CD8-positive, alpha-beta T cell (primary cell): ENCODE measurements at regions of chr1 and their contacts with region 1.

Region 1: GRCh38 chr1:147640553-147641165 is 29.7 kb downstream of the ACP6 start:
- DNase-seq: peak; percentile 52 to 90 (median 77)
- ATAC-seq: peak; percentile 100
- H3K4me3 ChIP-seq: no peak overlapping the region
- H3K4me3 Mint-ChIP-seq: no peak overlapping the region
- H3K27ac ChIP-seq: no peak overlapping the region
- H3K27ac Mint-ChIP-seq: no peak overlapping the region
- H3K4me1 ChIP-seq: peaks cover 7% of the 10 kb centered on the region
- H3K4me1 Mint-ChIP-seq: peaks cover 20% of the 10 kb centered on the region
- H3K27me3 ChIP-seq: no peaks in the 10 kb centered on the region
- H3K27me3 Mint-ChIP-seq: no peaks in the 10 kb centered on the region
- CTCF ChIP-seq: peak; percentile 72

Region 2: DNA sequence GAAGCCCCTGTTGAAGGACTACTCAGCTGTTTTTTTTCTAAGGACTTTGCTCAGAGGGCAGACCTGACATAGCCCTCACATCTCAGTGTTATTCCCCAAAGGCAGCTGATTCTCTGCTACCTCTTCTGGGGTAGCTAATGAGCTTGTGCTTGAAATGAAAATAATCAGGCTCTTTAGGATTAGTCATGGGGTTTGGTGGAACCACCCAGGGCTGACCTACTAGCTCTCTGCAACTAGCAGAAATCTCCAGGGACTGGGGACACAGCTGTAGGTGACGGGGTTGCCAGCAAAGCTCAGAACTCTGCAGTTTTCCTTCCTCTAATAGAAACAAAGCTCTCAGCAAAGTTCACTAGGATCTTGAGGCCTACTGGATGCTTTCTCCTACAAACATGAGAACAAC is 205.7 kb before region 1 on chr1:
- CTCF ChIA-PET with region 1: no interaction called
- POLR2A ChIA-PET with region 1: no interaction called
- intact Hi-C with region 1: no loop called
- DNase-seq: no peak
- ATAC-seq: no peak
- H3K4me3 ChIP-seq: no peak overlapping the region
- H3K4me3 Mint-ChIP-seq: no peak overlapping the region
- H3K27ac ChIP-seq: no peak overlapping the region
- H3K27ac Mint-ChIP-seq: no peak overlapping the region
- H3K4me1 ChIP-seq: no peaks in the 10 kb centered on the region
- H3K4me1 Mint-ChIP-seq: no peaks in the 10 kb centered on the region
- H3K27me3 ChIP-seq: no peaks in the 10 kb centered on the region
- H3K27me3 Mint-ChIP-seq: peaks cover 2% of the 10 kb centered on the region
- CTCF ChIP-seq: no peak

Region 3: GRCh38 chr1:147494998-147495580 is 145.6 kb before region 1 on chr1:
- CTCF ChIA-PET with region 1: interaction called, 25 read pairs
- POLR2A ChIA-PET with region 1: interaction called, 4 read pairs
- intact Hi-C with region 1: loop called (anchors 1 kb)
- DNase-seq: peak; percentile 31 to 82 (median 72)
- ATAC-seq: peak; percentile 96
- H3K4me3 ChIP-seq: no peak overlapping the region
- H3K4me3 Mint-ChIP-seq: no peak overlapping the region
- H3K27ac ChIP-seq: no peak overlapping the region
- H3K27ac Mint-ChIP-seq: no peak overlapping the region
- H3K4me1 ChIP-seq: no peaks in the 10 kb centered on the region
- H3K4me1 Mint-ChIP-seq: peaks cover 4% of the 10 kb centered on the region
- H3K27me3 ChIP-seq: no peaks in the 10 kb centered on the region
- H3K27me3 Mint-ChIP-seq: peaks cover 9% of the 10 kb centered on the region
- CTCF ChIP-seq: peak; percentile 96

Region 4: GRCh38 chr1:147515046-147515869 is 125.4 kb before region 1 on chr1:
- CTCF ChIA-PET with region 1: interaction called, 53 read pairs
- POLR2A ChIA-PET with region 1: interaction called, 4 read pairs
- intact Hi-C with region 1: loop called (anchors 1 to 5 kb)
- DNase-seq: peak in 2 of 9 experiments; percentile 47 to 60
- ATAC-seq: peak; percentile 65
- H3K4me3 ChIP-seq: no peak overlapping the region
- H3K4me3 Mint-ChIP-seq: no peak overlapping the region
- H3K27ac ChIP-seq: no peak overlapping the region
- H3K27ac Mint-ChIP-seq: no peak overlapping the region
- H3K4me1 ChIP-seq: no peaks in the 10 kb centered on the region
- H3K4me1 Mint-ChIP-seq: peaks cover 4% of the 10 kb centered on the region
- H3K27me3 ChIP-seq: no peaks in the 10 kb centered on the region
- H3K27me3 Mint-ChIP-seq: peaks cover 9% of the 10 kb centered on the region
- CTCF ChIP-seq: peak; percentile 33

Region 5: GRCh38 chr1:147627435-147628110 is 13.1 kb before region 1 on chr1:
- CTCF ChIA-PET with region 1: interaction called, 23 read pairs
- POLR2A ChIA-PET with region 1: no interaction called
- intact Hi-C with region 1: no loop called
- DNase-seq: peak in 8 of 9 experiments; percentile 34 to 71 (median 58)
- ATAC-seq: peak; percentile 83
- H3K4me3 ChIP-seq: no peak overlapping the region
- H3K4me3 Mint-ChIP-seq: no peak overlapping the region
- H3K27ac ChIP-seq: no peak overlapping the region
- H3K27ac Mint-ChIP-seq: no peak overlapping the region
- H3K4me1 ChIP-seq: peaks cover 6% of the 10 kb centered on the region
- H3K4me1 Mint-ChIP-seq: peaks cover 31% of the 10 kb centered on the region
- H3K27me3 ChIP-seq: no peaks in the 10 kb centered on the region
- H3K27me3 Mint-ChIP-seq: no peaks in the 10 kb centered on the region
- CTCF ChIP-seq: peak; percentile 77

Region 6: DNA sequence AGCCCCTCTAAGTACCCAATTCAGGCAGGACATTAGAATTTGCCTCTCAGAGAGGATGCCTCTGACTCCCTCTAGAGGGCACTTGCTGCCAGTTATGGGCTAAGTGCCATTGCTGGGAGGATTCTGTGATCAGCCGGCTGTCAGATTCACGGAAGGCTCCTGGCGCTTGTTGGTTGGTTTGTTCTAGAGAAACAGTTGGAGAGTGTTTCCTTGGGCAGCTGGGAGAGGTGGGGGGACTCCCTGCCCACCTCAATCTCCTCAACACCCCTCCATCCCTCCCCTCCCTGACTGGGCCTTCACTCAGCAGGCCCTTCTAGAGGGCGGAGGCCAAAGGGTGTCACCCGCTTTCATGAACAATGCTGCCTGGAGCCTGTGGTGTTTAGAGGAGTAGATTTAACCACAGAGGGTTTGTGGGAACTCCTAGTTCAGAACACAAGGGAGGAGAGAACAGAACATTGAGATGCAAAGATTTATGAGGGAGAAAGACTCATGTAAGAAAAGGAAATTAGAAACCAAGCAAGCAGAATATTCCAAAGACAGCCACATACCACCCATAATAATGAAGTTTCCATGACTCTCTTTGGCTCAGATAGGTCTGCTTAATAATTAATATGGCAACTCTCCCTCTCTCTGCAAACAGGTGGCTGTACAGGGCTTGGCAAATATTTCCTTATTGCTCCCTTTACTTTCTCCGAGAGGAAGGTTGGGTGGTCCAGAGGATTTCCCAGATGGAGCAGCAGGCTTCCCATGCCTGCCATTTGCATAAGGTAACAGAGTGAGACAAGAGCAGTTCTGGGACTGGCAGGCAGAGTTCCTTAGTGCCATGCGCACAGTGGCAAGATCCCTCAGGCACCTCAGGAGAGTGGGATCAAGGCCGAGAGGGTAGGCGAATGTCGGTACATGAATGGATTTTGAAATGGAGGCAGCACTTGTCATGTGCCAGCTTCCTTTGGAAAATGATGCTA is 59.7 kb after region 1 on chr1:
- CTCF ChIA-PET with region 1: interaction called, 6 read pairs
- POLR2A ChIA-PET with region 1: no interaction called
- intact Hi-C with region 1: loop called (anchors 1 to 2 kb)
- DNase-seq: peak; percentile 25 to 76 (median 61)
- ATAC-seq: peak; percentile 89
- H3K4me3 ChIP-seq: no peak overlapping the region
- H3K4me3 Mint-ChIP-seq: peak overlapping the region; percentile 19
- H3K27ac ChIP-seq: no peak overlapping the region
- H3K27ac Mint-ChIP-seq: peak overlapping the region; percentile 1
- H3K4me1 ChIP-seq: no peaks in the 10 kb centered on the region
- H3K4me1 Mint-ChIP-seq: peaks cover 6% of the 10 kb centered on the region
- H3K27me3 ChIP-seq: no peaks in the 10 kb centered on the region
- H3K27me3 Mint-ChIP-seq: peaks cover 17% of the 10 kb centered on the region
- CTCF ChIP-seq: peak; percentile 71

Region 7: DNA sequence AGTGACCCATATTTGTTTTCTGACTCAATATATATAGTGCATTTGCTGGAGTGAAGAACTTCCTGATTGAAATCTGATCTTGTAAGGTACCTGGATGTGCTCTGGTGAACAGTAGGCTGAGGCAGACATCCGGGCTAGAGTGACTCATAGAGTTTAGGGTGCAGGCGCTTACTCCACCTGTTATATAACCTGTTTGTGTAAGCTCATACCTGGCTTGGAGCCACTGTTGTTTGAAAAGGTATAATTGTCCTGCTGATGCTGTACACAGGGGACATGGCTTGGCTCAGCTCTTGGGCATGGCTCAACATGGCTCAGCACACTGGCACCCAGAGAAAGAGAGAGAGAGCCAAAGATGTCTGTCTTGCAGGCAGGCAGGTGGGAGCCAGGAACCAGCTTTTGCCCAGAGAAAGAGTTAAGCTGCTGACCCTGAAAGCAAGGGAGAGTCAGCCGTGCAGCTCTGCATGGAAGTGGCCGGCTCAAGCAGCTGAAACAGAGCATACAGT is 76.5 kb after region 1 on chr1:
- CTCF ChIA-PET with region 1: no interaction called
- POLR2A ChIA-PET with region 1: no interaction called
- intact Hi-C with region 1: no loop called
- DNase-seq: peak in 1 of 9 experiments; percentile 25
- ATAC-seq: peak; percentile 51
- H3K4me3 ChIP-seq: no peak overlapping the region
- H3K4me3 Mint-ChIP-seq: no peak overlapping the region
- H3K27ac ChIP-seq: no peak overlapping the region
- H3K27ac Mint-ChIP-seq: peak overlapping the region; percentile 30
- H3K4me1 ChIP-seq: no peaks in the 10 kb centered on the region
- H3K4me1 Mint-ChIP-seq: peaks cover 4% of the 10 kb centered on the region
- H3K27me3 ChIP-seq: peaks cover 0 to 7% of the 10 kb centered on the region in 2 experiments
- H3K27me3 Mint-ChIP-seq: peaks cover 46% of the 10 kb centered on the region
- CTCF ChIP-seq: no peak